Activated T-helper 1 cell treated with anti-CD3 and anti-CD28 coated beads, Interleukin-12 subunit alpha, Interleukin-12 subunit beta, Interleukin-2, Interleukin-4 antibody, amounts not matched to agents 30 ng/mL and 10 ng/mL and 1 ng/mL, durations not matched to agents 14 hours and 24 hours and 36 hours (primary cell): ENCODE measurements at regions of chr16 and their contacts with region 1.

Region 1: DNA sequence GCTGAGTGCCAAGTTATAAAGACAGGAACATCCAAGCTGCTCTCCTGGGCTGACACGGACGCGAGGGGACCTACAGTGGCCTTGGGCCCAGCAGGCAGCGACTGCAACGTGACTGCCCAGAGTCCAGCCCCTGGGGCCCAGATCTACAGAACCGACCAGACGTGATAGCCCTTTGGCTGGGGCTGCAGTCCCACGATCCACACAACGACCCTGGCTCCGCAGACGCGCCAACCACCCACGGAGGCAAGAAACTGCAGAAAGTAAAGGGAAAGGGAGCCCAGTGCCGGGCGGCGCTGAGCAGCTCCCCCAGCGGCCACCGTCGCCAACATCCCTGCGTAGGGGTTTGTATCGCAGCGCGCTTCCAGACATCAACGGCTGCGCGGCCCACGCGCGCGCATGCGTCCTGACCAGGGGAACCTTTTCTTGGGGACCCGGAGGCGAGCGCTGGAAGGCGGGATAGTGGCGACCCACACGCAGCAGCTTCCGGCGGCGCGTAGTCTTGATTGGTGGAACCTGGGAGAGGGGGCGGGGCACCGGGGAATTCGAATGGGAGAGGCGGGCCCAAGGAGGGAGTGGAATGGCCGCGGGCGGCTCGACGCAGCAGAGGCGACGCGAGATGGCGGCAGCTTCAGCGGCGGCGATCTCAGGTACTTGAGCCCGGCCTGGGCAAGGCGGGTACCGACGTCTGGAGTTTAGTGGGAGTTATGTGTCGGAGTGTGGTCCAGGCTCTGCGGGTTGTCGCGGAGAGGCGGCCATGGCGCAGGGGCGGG is at the start of gene KIF22:
- DNase-seq: peak; percentile 100
- H3K4me3 Mint-ChIP-seq: peak within 1 kb of the TSS; percentile 99
- H3K27ac Mint-ChIP-seq: peak within 1 kb of the TSS; percentile 97
- H3K4me1 Mint-ChIP-seq: peaks cover 44% of the 10 kb centered on the region
- H3K27me3 Mint-ChIP-seq: no peaks in the 10 kb centered on the region
- total RNA-seq, gene KIF22: 134 and 140 TPM in 2 replicates

Region 2: DNA sequence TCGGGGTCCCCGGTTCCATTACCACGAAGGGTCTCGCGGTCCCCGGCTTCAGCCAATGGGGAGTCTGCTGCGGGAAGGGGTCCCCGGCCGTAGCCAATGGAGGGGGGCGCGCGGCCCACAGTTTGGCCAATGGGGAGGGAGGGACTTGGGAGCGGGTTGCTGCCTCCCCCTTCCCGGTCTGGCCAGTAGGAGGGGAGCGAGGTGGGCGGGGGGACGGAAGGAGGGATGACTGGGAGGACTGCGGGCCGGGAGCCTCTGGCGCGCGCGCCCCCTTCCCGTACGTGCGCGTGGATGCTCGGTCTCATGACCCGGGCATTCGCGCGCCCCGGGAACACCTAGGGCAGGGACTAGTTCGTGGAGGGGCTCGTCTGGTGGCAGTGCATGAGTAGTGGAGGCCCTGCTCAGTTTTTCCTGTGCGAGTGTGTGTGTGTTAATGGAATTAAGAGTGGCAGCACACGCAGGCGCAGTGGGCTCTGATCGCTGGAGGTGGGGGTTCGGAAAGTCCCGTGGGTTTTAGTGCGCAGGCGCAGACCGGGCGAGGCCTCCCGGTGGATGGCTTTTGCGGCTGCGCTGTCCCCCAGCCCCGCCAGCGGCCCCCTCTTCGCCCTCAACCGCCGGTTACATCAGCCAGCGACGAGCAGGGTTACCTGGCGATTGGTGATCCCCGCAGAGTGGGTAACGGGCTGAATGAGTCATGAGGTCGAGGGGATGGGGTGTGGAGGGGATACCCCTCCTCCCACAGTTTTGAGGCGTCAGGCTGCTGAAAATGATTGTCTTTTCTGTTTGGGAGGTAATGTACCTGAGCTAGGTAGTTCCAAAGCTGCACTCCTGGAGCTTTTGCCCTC is 966.3 kb before region 1 on chr16:
- intact Hi-C with region 1: loop called (anchors 5 kb)
- DNase-seq: peak; percentile 93
- H3K4me3 Mint-ChIP-seq: peak overlapping the region; percentile 98
- H3K27ac Mint-ChIP-seq: peak overlapping the region; percentile 100
- H3K4me1 Mint-ChIP-seq: peaks cover 52% of the 10 kb centered on the region
- H3K27me3 Mint-ChIP-seq: peaks cover 4% of the 10 kb centered on the region

Region 3: GRCh38 chr16:29738514-29738913 is 51.9 kb before region 1 on chr16:
- intact Hi-C with region 1: loop called (anchors 2 kb)
- DNase-seq: peak; percentile 58
- H3K4me3 Mint-ChIP-seq: peak overlapping the region; percentile 48
- H3K27ac Mint-ChIP-seq: peak overlapping the region; percentile 62
- H3K4me1 Mint-ChIP-seq: peaks cover 66% of the 10 kb centered on the region
- H3K27me3 Mint-ChIP-seq: no peaks in the 10 kb centered on the region

Region 4: GRCh38 chr16:29745853-29746345 is 44.5 kb before region 1 on chr16 and contains the start of gene C16orf54:
- intact Hi-C with region 1: loop called (anchors 1 kb)
- DNase-seq: peak; percentile 89
- H3K4me3 Mint-ChIP-seq: peak within 1 kb of the TSS; percentile 97
- H3K27ac Mint-ChIP-seq: peak within 1 kb of the TSS; percentile 97
- H3K4me1 Mint-ChIP-seq: peaks cover 49% of the 10 kb centered on the region
- H3K27me3 Mint-ChIP-seq: no peaks in the 10 kb centered on the region
- total RNA-seq, gene C16orf54: 21.3 and 24.6 TPM in 2 replicates

Region 5: GRCh38 chr16:29825145-29826044 is 35.0 kb after region 1 on chr16:
- intact Hi-C with region 1: loop called (anchors 1 kb)
- DNase-seq: peak; percentile 50
- H3K4me3 Mint-ChIP-seq: peak overlapping the region; percentile 68
- H3K27ac Mint-ChIP-seq: peak overlapping the region; percentile 85
- H3K4me1 Mint-ChIP-seq: peaks cover 42% of the 10 kb centered on the region
- H3K27me3 Mint-ChIP-seq: no peaks in the 10 kb centered on the region

Region 6: DNA sequence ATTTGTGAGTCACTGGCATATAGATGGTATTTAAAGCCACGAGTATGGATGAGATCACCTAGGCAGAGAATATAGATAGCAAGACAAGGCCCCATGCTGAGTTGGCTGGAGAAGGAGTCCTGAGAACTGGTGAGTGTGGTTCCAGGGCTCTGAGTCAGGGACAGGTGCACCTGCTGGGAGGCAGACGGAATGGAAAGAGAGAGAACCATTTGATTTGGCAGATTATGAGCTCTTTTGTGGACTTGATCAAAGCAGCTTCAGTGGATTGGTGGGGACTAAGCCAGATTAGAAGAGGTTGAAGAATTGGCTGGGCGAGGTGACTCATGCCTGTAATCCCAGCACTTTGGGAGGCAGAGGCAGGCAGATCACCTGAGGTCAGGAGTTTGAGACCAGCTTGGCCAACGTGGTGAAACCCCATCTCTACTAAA is 228.4 kb after region 1 on chr16:
- intact Hi-C with region 1: loop called (anchors 2 kb)
- DNase-seq: no peak
- H3K4me3 Mint-ChIP-seq: no peak overlapping the region
- H3K27ac Mint-ChIP-seq: peak overlapping the region; percentile 1
- H3K4me1 Mint-ChIP-seq: peaks cover 17% of the 10 kb centered on the region
- H3K27me3 Mint-ChIP-seq: peaks cover 12% of the 10 kb centered on the region